A549 (cell line): ENCODE measurements at regions of chr4 and their contacts with region 1.

Region 1: DNA sequence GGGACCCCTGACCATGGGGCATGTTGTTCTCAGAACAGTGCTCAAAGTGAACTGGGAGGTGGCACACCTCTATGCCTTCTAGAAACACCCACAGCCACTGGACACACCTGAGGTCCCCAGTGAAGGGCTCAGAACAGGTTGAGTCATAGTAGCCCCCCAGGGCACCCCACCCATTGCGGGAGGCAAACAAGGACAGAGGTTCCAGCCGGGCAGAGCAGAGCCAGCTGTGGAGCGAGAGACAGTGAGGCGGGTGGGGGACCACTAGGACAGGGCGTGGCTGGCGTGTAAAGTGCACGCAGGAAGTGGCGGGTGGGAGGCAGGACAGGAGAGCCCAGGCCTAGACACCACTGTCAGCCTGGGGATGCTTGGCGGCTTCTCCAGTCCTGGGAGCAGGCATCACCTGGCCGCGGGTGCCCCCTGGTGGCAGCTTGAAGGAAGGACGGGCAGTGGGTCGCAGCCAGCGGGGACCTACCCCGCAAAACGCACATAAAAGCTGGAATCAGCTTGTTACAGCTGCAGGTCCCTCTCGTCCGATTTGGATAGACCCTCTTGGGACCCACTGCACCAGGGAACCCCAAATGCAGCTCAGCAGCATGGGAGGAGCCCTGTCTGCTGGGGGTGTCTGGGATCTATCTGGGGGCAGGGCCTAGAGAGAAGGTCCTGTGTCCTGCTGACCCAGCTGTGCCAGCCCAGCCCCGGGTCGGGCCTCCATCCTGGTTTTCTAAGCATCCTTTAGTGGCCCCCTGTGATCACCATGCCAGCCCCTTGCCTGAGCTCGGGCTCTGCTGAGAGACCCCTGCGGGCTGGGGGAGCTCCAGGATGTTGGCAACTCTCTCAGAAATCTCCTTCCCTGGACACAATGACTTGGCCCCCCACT is 57.6 kb downstream of the WFS1 start:
- DNase-seq: peak; percentile 49 to 65
- ATAC-seq: peak; percentile 60 to 89
- H3K4me3 ChIP-seq: no peak overlapping the region
- H3K27ac ChIP-seq: no peak overlapping the region
- H3K4me1 ChIP-seq: no peaks in the 10 kb centered on the region
- CTCF ChIP-seq: peak; percentile 72
- EP300 ChIP-seq: no peak
- POLR2A ChIP-seq: no peak
- RAD21 ChIP-seq: peak; percentile 82

Region 2: DNA sequence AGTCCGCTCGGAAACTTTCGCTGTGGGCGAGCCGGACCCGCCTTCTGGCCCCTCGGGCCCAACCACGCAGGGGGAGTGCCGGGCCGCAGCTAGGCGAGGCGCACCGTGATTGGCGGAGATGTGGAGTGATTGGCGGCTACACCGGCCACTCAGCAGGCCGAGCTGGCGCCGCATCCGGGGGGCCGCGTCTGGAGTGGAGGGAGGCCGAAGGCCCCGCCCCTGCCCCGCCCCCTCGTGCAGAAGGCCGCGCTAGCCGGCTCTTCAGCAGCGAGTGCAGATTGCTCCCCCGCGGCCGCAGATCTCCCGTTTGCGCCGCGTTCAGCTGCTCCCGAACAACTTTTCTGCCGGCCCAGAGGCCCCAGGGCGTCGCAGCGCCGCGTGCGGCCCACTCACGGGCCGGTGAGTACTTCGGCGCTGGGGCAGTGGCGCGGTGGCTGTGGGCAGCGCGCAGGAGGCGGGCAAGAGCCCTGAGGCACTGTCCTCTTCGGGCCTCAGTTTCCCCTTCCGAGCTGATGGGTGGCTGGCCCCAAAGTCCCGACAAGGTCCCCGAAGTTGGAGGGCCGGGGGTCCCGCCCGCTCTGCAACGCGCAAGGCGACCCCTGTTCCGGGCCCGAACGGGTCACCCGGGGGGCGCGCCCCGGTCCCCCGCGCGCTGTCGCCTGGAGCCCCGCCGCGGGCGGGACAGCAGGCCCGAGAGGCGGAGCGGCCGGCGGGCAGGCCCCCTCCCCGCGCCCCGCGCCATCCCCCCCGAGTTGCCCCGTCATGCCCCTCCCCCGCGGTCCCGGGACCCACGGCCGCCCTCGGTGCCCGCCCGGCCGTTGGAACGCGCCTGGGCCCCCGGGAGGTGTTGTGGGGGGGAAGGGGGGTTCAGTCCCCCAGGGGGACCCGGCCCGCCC is 57.4 kb before region 1 on chr4 and contains the start of gene WFS1:
- CTCF ChIA-PET with region 1: interaction called, 408 read pairs
- POLR2A ChIA-PET with region 1: no interaction called
- DNase-seq: peak; percentile 94 to 97
- ATAC-seq: peak; percentile 98 to 100
- H3K4me3 ChIP-seq: peak within 1 kb of the TSS; percentile 87
- H3K27ac ChIP-seq: peak within 1 kb of the TSS; percentile 76 to 91
- H3K4me1 ChIP-seq: peaks cover 28% of the 10 kb centered on the region
- CTCF ChIP-seq: no peak
- EP300 ChIP-seq: no peak
- POLR2A ChIP-seq: peak; percentile 60
- RAD21 ChIP-seq: no peak
- polyA plus RNA-seq, gene WFS1: 8.8 and 12.0 TPM in 2 replicates

Region 3: DNA sequence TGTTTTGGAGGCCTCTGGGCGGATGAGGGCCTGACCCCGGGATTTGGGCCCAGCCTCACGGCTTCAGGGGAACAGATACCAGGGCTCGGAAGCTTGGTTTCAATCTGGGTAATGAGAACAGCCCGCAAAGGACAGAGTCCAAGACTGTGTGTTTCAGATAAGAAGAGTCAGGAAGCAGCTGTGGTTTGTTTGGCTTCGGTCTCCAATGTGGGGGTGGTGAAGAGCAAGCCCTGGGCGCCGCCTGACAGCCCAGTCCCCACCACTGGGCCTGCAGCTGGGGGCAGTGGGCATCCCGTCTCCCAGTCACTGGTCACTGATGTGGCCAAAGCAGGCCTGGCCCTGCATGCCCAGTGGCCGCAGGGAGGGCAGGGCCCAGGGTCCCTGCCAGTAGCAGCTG is 48.5 kb before region 1 on chr4:
- CTCF ChIA-PET with region 1: interaction called, 12 read pairs
- POLR2A ChIA-PET with region 1: no interaction called
- DNase-seq: no peak
- ATAC-seq: no peak
- H3K4me3 ChIP-seq: no peak overlapping the region
- H3K27ac ChIP-seq: no peak overlapping the region
- H3K4me1 ChIP-seq: no peaks in the 10 kb centered on the region; the same call in 2 of the 3 replicates
- CTCF ChIP-seq: no peak
- EP300 ChIP-seq: no peak
- POLR2A ChIP-seq: no peak
- RAD21 ChIP-seq: no peak

Region 4: GRCh38 chr4:6343950-6344408 is 16.7 kb after region 1 on chr4:
- CTCF ChIA-PET with region 1: interaction called, 82 read pairs
- POLR2A ChIA-PET with region 1: no interaction called
- DNase-seq: peak; percentile 85
- ATAC-seq: peak; percentile 96 to 97
- H3K4me3 ChIP-seq: no peak overlapping the region
- H3K27ac ChIP-seq: peak overlapping the region; percentile 73 to 87
- H3K4me1 ChIP-seq: peaks cover 20% of the 10 kb centered on the region
- CTCF ChIP-seq: peak; percentile 52
- EP300 ChIP-seq: no peak
- POLR2A ChIP-seq: no peak
- RAD21 ChIP-seq: peak; percentile 51 to 53

Region 5: GRCh38 chr4:6401797-6402196 is 74.5 kb after region 1 on chr4:
- CTCF ChIA-PET with region 1: interaction called, 11 read pairs
- POLR2A ChIA-PET with region 1: no interaction called
- DNase-seq: no peak
- ATAC-seq: no peak
- H3K4me3 ChIP-seq: no peak overlapping the region
- H3K27ac ChIP-seq: no peak overlapping the region
- H3K4me1 ChIP-seq: no peaks in the 10 kb centered on the region
- CTCF ChIP-seq: no peak
- EP300 ChIP-seq: no peak
- POLR2A ChIP-seq: no peak
- RAD21 ChIP-seq: no peak